MCF 10A (cell line): ENCODE measurements at regions of chr16 and their contacts with region 1.

Region 1: GRCh38 chr16:2160915-2161551 is 5.5 kb downstream of the TRAF7 start:
- DNase-seq: peak; percentile 48
- H3K4me3 Mint-ChIP-seq: peak overlapping the region; percentile 38
- H3K27ac Mint-ChIP-seq: peak overlapping the region; percentile 12
- H3K4me1 Mint-ChIP-seq: peaks cover 38% of the 10 kb centered on the region
- H3K27me3 Mint-ChIP-seq: no peaks in the 10 kb centered on the region
- CTCF ChIP-seq: no peak

Region 2: DNA sequence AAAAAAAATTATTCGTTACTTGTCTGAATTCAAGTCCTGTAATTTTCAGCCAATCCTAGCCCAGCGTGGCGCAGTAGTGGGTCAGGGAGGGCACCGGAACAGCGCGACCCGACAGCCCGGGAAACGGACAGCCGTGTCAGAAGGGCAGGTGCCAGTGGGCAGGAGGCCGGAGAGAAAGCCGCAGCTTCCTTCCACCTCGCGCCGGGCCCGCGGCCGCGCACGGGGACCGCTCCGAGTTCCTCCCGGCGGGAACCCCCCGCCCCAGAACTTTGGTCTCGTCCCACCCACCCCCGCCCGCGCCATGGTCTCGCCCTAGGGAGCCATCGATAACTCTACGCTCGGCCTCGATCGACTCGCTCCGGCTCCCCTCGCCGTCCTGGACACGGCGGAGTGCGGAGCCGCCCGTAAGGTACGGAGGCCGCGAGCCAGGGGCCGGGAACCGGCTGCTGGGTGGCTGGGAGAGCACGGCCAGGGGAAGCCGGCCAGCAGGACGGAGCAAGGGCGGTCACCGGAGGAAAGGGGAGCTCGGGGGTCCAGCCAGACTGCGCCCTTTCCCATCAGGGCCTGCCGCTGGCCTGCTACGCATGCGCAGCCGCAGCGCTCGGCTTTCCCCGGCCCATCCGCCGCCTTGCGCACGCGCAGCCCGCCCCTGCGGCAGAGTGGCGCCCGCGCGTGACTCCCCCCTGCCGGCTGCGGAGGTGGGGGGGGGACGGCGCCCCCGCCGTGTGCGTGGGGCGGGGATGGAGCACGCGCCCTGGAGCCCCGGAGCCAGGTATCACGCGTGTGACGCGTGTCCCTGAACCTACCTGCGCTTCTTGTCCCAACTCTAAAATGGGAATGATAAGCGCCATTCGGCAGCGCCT is 44.3 kb after region 1 on chr16 and contains the start of gene MLST8:
- CTCF ChIA-PET with region 1: interaction called, 6 read pairs
- POLR2A ChIA-PET with region 1: interaction called, 27 read pairs
- intact Hi-C with region 1: no loop called
- DNase-seq: peak; percentile 79
- H3K4me3 Mint-ChIP-seq: peak within 1 kb of the TSS; percentile 68
- H3K27ac Mint-ChIP-seq: peak within 1 kb of the TSS; percentile 69
- H3K4me1 Mint-ChIP-seq: peaks cover 15% of the 10 kb centered on the region
- H3K27me3 Mint-ChIP-seq: no peaks in the 10 kb centered on the region
- CTCF ChIP-seq: peak; percentile 13
- total RNA-seq, gene MLST8: 63.4 and 87.6 TPM in 2 replicates

Region 3: DNA sequence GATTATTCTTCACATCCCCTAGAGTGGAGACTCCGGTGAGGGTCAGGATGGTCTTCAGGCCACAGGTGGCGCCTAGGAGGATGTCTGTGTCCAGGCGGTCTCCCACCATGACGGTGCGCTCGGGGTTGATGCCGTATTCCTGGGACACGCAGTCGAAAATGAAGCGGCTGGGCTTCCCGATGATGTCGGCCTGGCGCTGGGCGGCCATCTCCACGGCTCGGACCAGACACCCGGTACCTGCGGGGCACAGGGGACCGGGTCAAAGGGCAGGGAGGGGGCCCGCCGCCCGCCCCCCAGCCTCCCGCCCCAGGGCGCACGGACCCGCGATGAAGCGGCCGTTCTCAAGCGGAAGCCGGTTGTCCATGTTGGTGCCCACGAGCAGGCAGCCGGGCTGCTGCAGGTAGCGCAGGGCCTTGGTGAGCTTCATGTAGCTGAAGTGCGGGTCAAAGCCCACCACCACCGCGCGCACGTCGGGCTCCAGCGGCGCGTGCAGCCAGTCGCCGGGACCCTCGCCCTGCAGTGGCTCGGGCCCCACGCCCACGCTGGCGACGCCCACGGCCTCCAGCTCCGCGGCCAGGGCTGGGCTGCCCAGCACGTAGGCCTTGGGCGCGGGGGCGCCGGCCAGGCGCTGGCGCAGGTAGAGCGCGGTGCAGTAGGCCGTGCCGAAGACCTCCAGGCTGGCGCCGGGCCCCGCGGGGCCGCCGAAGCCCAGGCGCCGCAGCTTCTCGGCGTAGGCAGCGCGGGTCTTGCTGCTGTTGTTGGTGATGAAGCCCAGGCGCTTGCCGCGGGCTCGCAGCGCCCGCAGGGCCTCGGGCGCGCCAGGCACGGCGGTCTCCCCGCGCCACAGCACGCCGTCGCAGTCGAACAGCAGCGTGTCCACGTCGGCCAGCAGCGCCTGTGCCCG is 53.0 kb after region 1 on chr16:
- CTCF ChIA-PET with region 1: interaction called, 6 read pairs
- POLR2A ChIA-PET with region 1: interaction called, 34 read pairs
- intact Hi-C with region 1: no loop called
- DNase-seq: no peak
- H3K4me3 Mint-ChIP-seq: peak overlapping the region; percentile 77
- H3K27ac Mint-ChIP-seq: peak overlapping the region; percentile 33
- H3K4me1 Mint-ChIP-seq: peaks cover 18% of the 10 kb centered on the region
- H3K27me3 Mint-ChIP-seq: no peaks in the 10 kb centered on the region
- CTCF ChIP-seq: no peak

Region 4: GRCh38 chr16:2223375-2224182 is 62.5 kb after region 1 on chr16 and contains the start of gene E4F1:
- CTCF ChIA-PET with region 1: no interaction called
- POLR2A ChIA-PET with region 1: interaction called, 10 read pairs
- intact Hi-C with region 1: loop called (anchors 2 kb)
- DNase-seq: peak; percentile 98
- H3K4me3 Mint-ChIP-seq: peak within 1 kb of the TSS; percentile 78
- H3K27ac Mint-ChIP-seq: peak within 1 kb of the TSS; percentile 85
- H3K4me1 Mint-ChIP-seq: peaks cover 4% of the 10 kb centered on the region
- H3K27me3 Mint-ChIP-seq: no peaks in the 10 kb centered on the region
- CTCF ChIP-seq: no peak
- total RNA-seq, gene E4F1: 26.2 and 28.4 TPM in 2 replicates

Region 5: GRCh38 chr16:2317231-2318020 is 156.4 kb after region 1 on chr16:
- CTCF ChIA-PET with region 1: no interaction called
- POLR2A ChIA-PET with region 1: no interaction called
- intact Hi-C with region 1: no loop called
- DNase-seq: no peak
- H3K4me3 Mint-ChIP-seq: no peak overlapping the region
- H3K27ac Mint-ChIP-seq: no peak overlapping the region
- H3K4me1 Mint-ChIP-seq: no peaks in the 10 kb centered on the region
- H3K27me3 Mint-ChIP-seq: peaks cover 32% of the 10 kb centered on the region
- CTCF ChIP-seq: no peak